HepG2 (cell line): ENCODE measurements at regions of chr5 and their contacts with region 1.

Region 1: DNA sequence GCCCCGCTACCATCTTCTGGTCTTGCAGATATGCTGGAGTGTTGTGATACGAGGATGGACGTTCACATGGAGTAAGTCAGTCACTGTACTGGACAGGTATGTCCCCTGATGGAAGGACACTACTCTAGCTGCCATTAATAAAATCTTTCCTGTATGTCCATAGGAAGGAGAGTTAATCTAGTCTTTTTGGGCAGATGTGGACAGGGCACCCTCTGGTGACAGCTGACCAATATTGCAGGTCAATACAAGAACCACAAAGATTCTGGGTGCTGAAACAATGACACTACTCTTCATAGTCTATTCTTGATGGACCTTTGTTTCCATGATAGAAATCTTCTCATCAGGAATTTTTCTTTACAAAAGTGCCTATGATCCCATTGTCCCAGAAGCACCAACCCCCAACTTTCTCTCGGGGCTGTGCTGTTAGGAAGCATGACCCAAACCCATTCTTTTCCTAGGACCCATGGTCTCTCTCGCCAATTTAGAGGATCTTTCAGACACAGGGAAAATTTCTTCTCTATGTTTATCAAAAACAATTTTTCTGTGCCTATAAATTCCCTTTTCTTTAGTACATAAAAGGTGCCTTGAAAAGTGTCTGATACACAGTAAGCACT is 376.9 kb downstream of the DTWD2 start:
- DNase-seq: peak; percentile 10
- ATAC-seq: peak; percentile 66
- H3K4me3 ChIP-seq: no peak overlapping the region
- H3K27ac ChIP-seq: no peak overlapping the region
- H3K4me1 ChIP-seq: no peaks in the 10 kb centered on the region
- H3K27me3 ChIP-seq: no peaks in the 10 kb centered on the region
- CTCF ChIP-seq: peak; percentile 77
- EP300 ChIP-seq: no peak
- POLR2A ChIP-seq: no peak
- RAD21 ChIP-seq: peak; percentile 68

Region 2: DNA sequence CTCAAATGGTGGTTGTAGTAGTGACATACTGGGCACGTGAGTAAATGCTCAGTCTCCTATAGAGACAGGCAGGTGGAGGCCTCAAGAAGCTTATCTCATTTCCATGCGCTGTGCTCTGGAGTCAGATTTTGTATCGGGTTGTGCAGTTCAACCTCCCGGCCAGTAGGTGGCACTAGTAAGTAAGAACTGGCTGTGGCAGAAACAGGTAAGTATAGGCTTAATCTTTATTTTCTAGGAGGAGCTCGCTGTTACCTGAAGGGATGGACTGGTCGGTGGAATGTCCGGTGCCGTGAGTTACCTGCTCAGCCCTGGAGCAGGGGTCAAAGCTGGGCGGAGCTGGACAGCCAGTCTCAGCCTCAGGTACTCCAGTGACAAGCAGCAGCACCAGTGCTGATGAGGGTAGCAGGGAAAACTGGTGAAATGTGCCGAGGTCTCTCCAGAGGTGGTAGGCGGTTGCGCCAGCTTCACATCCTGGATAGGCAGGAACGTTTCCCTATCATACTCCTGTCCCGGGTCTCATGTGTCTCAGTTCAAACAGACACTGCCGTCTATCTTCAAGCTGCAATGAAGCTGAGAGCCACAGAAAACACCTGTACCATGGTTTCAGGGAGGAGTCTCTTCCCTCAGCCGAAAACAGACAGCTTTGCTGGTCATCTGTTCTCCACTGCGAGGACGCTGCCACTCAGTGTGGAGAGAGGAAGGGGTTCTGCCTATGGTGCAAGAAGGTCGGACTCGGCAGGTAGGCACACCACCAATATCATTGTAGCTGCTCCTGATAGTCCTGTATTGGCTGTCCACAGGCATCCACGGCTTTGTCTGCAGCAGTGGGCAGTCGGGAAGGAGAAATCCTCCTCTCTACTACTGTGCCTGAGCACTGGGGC is 1156.5 kb before region 1 on chr5:
- CTCF ChIA-PET with region 1: interaction called, 13 read pairs
- POLR2A ChIA-PET with region 1: no interaction called
- in situ Hi-C with region 1: no loop called
- intact Hi-C with region 1: loop called (anchors 1 kb)
- DNase-seq: peak; percentile 50
- ATAC-seq: peak; percentile 87
- H3K4me3 ChIP-seq: peak overlapping the region; percentile 51 to 62 (median 53)
- H3K27ac ChIP-seq: no peak overlapping the region
- H3K4me1 ChIP-seq: peaks cover 11% of the 10 kb centered on the region; the same call in 1 of the 2 replicates
- H3K27me3 ChIP-seq: no peaks in the 10 kb centered on the region
- CTCF ChIP-seq: peak; percentile 86
- EP300 ChIP-seq: no peak
- POLR2A ChIP-seq: no peak
- RAD21 ChIP-seq: no peak; the same call in 1 of the 2 replicates

Region 3: GRCh38 chr5:117590944-117591343 is 1020.5 kb before region 1 on chr5:
- CTCF ChIA-PET with region 1: no interaction called
- POLR2A ChIA-PET with region 1: no interaction called
- in situ Hi-C with region 1: loop called (anchors 25 kb)
- intact Hi-C with region 1: loop called (anchors 5 kb)
- DNase-seq: peak; percentile 25
- ATAC-seq: peak; percentile 62
- H3K4me3 ChIP-seq: no peak overlapping the region
- H3K27ac ChIP-seq: no peak overlapping the region
- H3K4me1 ChIP-seq: no peaks in the 10 kb centered on the region
- H3K27me3 ChIP-seq: no peaks in the 10 kb centered on the region
- CTCF ChIP-seq: peak; percentile 40; the same call in 1 of the 2 replicates
- EP300 ChIP-seq: no peak
- POLR2A ChIP-seq: no peak
- RAD21 ChIP-seq: no peak

Region 4: GRCh38 chr5:118060833-118061232 is 550.6 kb before region 1 on chr5:
- CTCF ChIA-PET with region 1: no interaction called
- POLR2A ChIA-PET with region 1: no interaction called
- in situ Hi-C with region 1: no loop called
- intact Hi-C with region 1: loop called (anchors 2 kb)
- DNase-seq: no peak
- ATAC-seq: no peak
- H3K4me3 ChIP-seq: no peak overlapping the region
- H3K27ac ChIP-seq: no peak overlapping the region
- H3K4me1 ChIP-seq: no peaks in the 10 kb centered on the region
- H3K27me3 ChIP-seq: no peaks in the 10 kb centered on the region
- CTCF ChIP-seq: peak; percentile 15; the same call in 1 of the 2 replicates
- EP300 ChIP-seq: no peak
- POLR2A ChIP-seq: no peak
- RAD21 ChIP-seq: no peak

Region 5: DNA sequence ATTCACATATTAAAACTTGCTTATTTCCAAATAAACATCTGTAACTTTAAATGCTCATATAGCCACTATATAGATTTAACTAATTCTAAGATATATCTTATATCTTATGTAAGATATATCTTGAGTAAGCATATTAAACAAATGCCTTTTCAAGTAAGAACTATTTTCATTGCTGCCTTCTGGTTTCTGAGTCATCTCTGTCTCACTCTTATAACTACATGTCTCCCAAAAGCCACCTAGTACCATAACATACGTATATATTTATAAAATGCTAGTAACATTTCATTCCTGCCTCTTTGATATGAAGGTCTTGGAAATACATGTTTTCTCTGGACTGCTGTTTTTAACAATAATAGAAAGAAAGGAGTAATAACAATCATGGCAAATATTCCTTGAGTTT is 52.6 kb before region 1 on chr5:
- CTCF ChIA-PET with region 1: no interaction called
- POLR2A ChIA-PET with region 1: no interaction called
- in situ Hi-C with region 1: no loop called
- intact Hi-C with region 1: no loop called
- DNase-seq: no peak
- ATAC-seq: no peak
- H3K4me3 ChIP-seq: no peak overlapping the region
- H3K27ac ChIP-seq: no peak overlapping the region
- H3K4me1 ChIP-seq: no peaks in the 10 kb centered on the region
- H3K27me3 ChIP-seq: no peaks in the 10 kb centered on the region; a peak in 1 of 5 replicates
- CTCF ChIP-seq: no peak
- EP300 ChIP-seq: no peak
- POLR2A ChIP-seq: no peak
- RAD21 ChIP-seq: no peak

Region 6: DNA sequence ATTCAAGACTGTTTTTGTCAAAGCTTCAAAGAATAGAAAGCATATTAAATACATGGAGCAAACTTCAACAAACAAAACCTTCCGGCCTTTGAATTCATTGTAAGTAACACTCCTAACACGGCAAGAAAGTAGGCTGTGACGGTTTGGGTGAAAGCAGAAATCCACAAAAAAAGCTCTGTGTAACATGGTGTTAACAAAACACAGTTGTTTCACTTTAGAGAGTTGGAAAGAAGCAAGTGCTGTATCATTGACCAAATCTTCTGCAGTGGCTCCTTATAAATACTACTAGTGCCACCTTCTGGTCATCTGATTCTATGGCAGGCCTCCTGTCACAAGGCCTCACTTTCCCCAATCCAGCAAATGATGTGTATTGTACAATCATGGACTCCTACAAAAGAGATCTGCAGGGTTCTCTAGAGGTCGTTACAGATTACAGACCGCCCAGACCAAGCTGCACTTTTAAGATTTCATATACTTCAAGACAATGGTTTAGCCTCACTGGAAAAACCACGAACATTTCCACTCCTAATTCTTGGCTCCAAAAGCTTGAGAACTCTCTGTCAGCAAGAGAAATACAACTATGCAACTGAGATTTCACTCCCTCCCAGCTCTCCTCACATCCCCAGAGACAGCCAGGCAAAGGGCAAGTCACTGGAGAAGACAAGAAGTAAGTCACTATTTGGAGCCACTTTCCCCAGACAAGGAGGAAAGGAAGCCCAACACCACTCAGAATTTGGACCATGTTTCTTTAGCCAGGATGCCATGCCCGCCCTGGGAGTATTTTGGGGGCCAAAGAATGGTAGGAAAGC is 180.7 kb after region 1 on chr5:
- CTCF ChIA-PET with region 1: no interaction called
- POLR2A ChIA-PET with region 1: no interaction called
- in situ Hi-C with region 1: no loop called
- intact Hi-C with region 1: loop called (anchors 10 kb)
- DNase-seq: peak; percentile 54
- ATAC-seq: peak; percentile 95
- H3K4me3 ChIP-seq: no peak overlapping the region
- H3K27ac ChIP-seq: no peak overlapping the region
- H3K4me1 ChIP-seq: no peaks in the 10 kb centered on the region
- H3K27me3 ChIP-seq: no peaks in the 10 kb centered on the region; a peak in 1 of 5 replicates
- CTCF ChIP-seq: peak; percentile 74
- EP300 ChIP-seq: no peak
- POLR2A ChIP-seq: no peak
- RAD21 ChIP-seq: no peak